ENCODE measurements at regions of chr7 and their contacts with region 1.

Region 1: GRCh38 chr7:30148951-30149471 is 14.2 kb downstream of the MTURN start:
- DNase-seq: peak; percentile 56
- ATAC-seq: peak; percentile 69
- H3K4me3 Mint-ChIP-seq: peak overlapping the region; percentile 42
- H3K27ac Mint-ChIP-seq: no peak overlapping the region
- H3K4me1 Mint-ChIP-seq: peaks cover 2% of the 10 kb centered on the region
- H3K27me3 Mint-ChIP-seq: no peaks in the 10 kb centered on the region

Region 2: DNA sequence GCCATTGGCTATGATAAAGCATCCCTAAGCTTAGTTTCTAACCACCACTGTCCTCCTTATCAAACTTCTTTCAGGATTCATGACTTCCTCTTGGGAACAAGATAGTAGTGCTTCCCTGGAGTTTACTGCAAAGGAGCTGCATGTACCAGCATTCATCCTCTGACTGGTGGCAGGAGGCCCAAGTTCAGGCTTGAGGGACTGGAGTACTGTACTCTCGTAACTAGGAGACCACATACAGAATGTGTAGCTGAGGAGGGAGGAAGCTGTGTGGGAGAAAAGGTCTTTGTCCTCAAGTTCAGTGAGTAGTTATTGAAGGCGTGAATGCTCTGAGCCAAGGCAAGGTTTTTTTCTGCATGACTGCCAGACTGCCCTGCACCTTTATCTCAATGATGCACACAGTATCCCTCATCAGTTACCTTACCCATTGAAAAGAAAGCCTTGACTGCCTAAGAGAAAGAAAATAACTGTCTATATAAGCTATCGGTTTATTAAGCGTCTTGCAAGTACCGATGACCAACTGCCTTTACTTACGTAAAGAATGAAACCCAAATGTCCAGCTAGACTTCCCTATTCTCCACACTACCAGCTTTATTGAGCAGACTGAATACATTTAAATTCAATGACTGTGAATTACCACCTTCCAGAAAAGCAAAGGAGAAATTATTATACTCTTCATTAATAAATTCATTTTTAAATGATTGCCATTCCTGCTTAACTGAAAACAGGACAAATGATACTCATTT is 172.2 kb before region 1 on chr7:
- CTCF ChIA-PET with region 1: no interaction called
- POLR2A ChIA-PET with region 1: no interaction called
- intact Hi-C with region 1: no loop called
- DNase-seq: no peak
- ATAC-seq: no peak
- H3K4me3 Mint-ChIP-seq: no peak overlapping the region
- H3K27ac Mint-ChIP-seq: no peak overlapping the region
- H3K4me1 Mint-ChIP-seq: no peaks in the 10 kb centered on the region
- H3K27me3 Mint-ChIP-seq: peaks cover 3% of the 10 kb centered on the region

Region 3: GRCh38 chr7:30026229-30027064 is 122.6 kb before region 1 on chr7 and contains the start of gene FKBP14:
- CTCF ChIA-PET with region 1: no interaction called
- POLR2A ChIA-PET with region 1: no interaction called
- intact Hi-C with region 1: no loop called
- DNase-seq: peak; percentile 95
- ATAC-seq: peak; percentile 91
- H3K4me3 Mint-ChIP-seq: no peak within 1 kb of the TSS
- H3K27ac Mint-ChIP-seq: peak within 1 kb of the TSS; percentile 90
- H3K4me1 Mint-ChIP-seq: peaks cover 34% of the 10 kb centered on the region
- H3K27me3 Mint-ChIP-seq: no peaks in the 10 kb centered on the region
- total RNA-seq, gene FKBP14: 7.2 to 8.3 TPM

Region 4: GRCh38 chr7:30134611-30135545 is 14.1 kb before region 1 on chr7 and contains the start of gene MTURN:
- CTCF ChIA-PET with region 1: interaction called, 3 read pairs
- POLR2A ChIA-PET with region 1: interaction called, 10 read pairs
- intact Hi-C with region 1: no loop called
- DNase-seq: peak; percentile 92
- ATAC-seq: peak; percentile 83
- H3K4me3 Mint-ChIP-seq: peak within 1 kb of the TSS; percentile 81
- H3K27ac Mint-ChIP-seq: peak within 1 kb of the TSS; percentile 84
- H3K4me1 Mint-ChIP-seq: peaks cover 4% of the 10 kb centered on the region
- H3K27me3 Mint-ChIP-seq: no peaks in the 10 kb centered on the region
- total RNA-seq, gene MTURN: 4.2 TPM